GM23248 (cell line): ENCODE measurements at regions of chr3 and their contacts with region 1.

Region 1: GRCh38 chr3:159252772-159253384 is 451.0 kb downstream of the MFSD1 start:
- DNase-seq: peak; percentile 74
- H3K4me3 ChIP-seq: peak overlapping the region; percentile 27; the same call in 1 of the 2 replicates
- H3K27ac ChIP-seq: no peak overlapping the region
- H3K4me1 ChIP-seq: peaks cover 31% of the 10 kb centered on the region
- H3K27me3 ChIP-seq: peaks cover 6% of the 10 kb centered on the region; the same call in 1 of the 2 replicates

Region 2: DNA sequence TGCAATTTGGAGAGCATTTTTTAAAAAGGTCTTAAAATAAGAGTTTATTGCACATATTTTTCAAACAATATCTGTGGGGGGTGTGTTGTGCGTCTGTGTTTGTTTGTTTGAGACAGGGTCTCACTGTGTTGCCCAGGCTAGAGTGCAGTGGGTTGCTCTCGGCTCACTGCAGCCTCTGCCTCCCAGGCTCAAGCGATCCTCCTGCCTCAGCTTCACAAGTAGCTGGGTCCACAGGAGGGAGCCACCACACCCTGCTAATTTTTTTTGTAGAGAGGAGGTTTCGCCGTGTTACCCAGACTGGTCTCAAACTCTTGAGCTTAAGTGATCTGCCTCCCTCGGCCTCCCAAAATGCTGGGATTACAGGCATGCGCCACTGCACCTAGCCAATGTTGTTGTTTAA is 679.2 kb before region 1 on chr3:
- in situ Hi-C with region 1: no loop called
- DNase-seq: no peak
- H3K4me3 ChIP-seq: no peak overlapping the region
- H3K27ac ChIP-seq: no peak overlapping the region
- H3K4me1 ChIP-seq: no peaks in the 10 kb centered on the region
- H3K27me3 ChIP-seq: no peaks in the 10 kb centered on the region

Region 3: DNA sequence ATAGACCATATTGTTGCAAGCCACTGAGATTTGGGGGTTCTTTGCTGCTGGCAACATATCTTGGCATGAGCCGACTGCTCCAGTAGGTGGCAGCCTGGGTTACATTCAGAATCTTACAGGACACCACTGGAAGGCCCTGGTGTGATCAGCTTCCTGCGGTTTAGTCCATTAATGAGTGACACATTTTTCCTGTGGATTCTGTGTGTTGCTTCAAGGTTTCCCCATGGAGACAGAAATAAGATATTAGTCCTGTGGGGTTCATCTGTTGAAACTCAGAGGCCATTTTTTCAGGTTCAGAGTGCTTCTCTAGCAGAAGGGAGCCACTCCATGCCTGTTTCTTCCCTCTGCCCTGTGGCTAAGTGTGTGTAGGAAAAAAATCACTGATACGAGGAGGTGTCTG is 334.9 kb before region 1 on chr3:
- in situ Hi-C with region 1: loop called (anchors 10 kb)
- DNase-seq: peak; percentile 93
- H3K4me3 ChIP-seq: no peak overlapping the region
- H3K27ac ChIP-seq: peak overlapping the region; percentile 34; the same call in 1 of the 2 replicates
- H3K4me1 ChIP-seq: peaks cover 14% of the 10 kb centered on the region
- H3K27me3 ChIP-seq: no peaks in the 10 kb centered on the region